SK-N-SH (cell line): ENCODE measurements at regions of chr1 and their contacts with region 1.

Region 1: DNA sequence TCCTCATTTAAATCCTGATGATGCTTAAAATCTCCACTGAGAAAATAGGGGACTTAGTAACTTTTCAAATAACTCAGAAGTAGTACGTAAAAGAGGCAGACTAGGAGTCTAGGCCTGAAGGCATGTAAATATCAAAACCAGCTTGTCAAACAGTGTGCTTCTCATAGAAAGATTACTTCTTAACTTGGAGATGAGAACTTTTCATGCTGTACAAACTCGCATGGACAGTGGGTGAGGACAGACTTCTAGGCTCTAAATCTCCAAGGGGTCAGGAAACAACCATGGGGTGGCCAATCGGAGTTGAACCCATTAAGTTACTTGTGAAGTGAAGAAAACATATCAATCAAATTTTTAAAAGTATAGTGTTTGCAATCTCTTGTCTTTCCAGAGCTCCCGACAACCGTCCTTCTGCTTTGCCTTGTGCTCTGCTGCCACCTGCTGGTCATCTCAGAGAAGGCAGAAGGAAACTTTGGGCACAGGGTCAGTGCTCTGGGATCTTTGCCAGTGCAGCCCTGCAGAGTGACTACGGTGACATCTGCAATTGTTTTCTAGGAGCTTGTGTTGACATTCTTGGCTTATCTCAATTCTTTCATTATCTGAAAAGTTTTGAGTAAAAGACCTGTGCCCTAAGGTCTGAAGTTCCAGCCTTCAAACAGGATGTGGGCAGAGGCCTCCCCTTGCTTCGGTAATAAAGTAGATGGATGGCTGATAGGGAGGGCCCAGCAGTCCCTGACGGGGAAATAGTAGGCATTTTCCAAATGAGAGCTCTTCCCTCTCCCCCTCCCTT is 105.1 kb upstream of the PDE4B start:
- DNase-seq: peak; percentile 70
- H3K4me3 ChIP-seq: no peak overlapping the region; a peak in 2 of 4 replicates
- H3K27ac ChIP-seq: no peak overlapping the region
- H3K4me1 ChIP-seq: peaks cover 0 to 6% of the 10 kb centered on the region in 2 experiments; a peak in 1 of 4 replicates
- H3K27me3 ChIP-seq: no peaks in the 10 kb centered on the region
- CTCF ChIP-seq: peak; percentile 89
- EP300 ChIP-seq: peak in 1 of 2 experiments; percentile 63; a peak in 2 of 4 replicates
- RAD21 ChIP-seq: peak; percentile 100

Region 2: DNA sequence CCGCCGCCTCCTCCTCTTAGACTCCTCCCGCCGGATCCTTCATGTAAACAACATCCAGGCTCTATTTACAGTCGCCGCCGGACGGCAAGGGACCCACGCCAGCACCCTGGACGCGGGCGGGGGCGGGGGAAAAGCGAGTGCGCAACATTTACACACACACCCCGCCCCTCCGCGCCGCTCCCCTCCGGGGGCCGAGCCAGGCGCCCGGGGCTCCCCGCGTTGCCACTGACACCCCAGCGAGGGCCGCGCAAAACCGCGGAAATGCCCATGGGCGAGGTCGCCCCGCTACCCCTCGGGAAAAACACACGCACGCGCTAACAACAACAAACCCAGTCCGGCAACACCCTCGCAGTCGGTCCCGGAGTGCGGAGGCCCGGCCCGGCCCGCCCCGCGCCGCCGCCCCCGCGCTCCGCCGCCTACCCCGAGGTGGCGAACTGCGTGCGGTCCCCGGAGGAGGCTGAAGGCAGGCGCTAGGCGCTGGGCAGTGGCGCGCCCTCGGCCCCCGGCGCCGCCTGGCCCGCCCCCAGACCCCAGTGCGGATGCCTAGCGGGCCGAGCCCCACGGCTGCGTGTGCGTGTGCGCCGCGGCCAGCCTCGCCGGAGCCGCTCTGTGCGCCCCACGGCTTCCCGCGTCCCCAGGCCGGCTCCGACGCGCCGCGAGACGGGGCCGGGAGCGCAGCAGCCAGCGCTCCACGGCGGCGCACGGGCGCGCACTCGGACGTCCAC is 620.7 kb before region 1 on chr1:
- CTCF ChIA-PET with region 1: interaction called, 13 read pairs
- POLR2A ChIA-PET with region 1: no interaction called
- DNase-seq: peak; percentile 87
- H3K4me3 ChIP-seq: peak overlapping the region; percentile 80 to 85
- H3K27ac ChIP-seq: peak overlapping the region in 1 of 2 experiments; percentile 87; a peak in 2 of 4 replicates
- H3K4me1 ChIP-seq: peaks cover 7 to 16% of the 10 kb centered on the region in 2 experiments; a peak in 3 of 4 replicates
- H3K27me3 ChIP-seq: no peaks in the 10 kb centered on the region
- CTCF ChIP-seq: no peak
- EP300 ChIP-seq: no peak
- RAD21 ChIP-seq: no peak

Region 3: GRCh38 chr1:65235867-65236805 is 451.5 kb before region 1 on chr1:
- CTCF ChIA-PET with region 1: interaction called, 30 read pairs
- POLR2A ChIA-PET with region 1: no interaction called
- DNase-seq: peak; percentile 25
- H3K4me3 ChIP-seq: no peak overlapping the region; a peak in 1 of 4 replicates
- H3K27ac ChIP-seq: no peak overlapping the region
- H3K4me1 ChIP-seq: peaks cover 0 to 7% of the 10 kb centered on the region in 2 experiments; a peak in 3 of 4 replicates
- H3K27me3 ChIP-seq: no peaks in the 10 kb centered on the region
- CTCF ChIP-seq: peak; percentile 61
- EP300 ChIP-seq: no peak
- RAD21 ChIP-seq: peak; percentile 78

Region 4: DNA sequence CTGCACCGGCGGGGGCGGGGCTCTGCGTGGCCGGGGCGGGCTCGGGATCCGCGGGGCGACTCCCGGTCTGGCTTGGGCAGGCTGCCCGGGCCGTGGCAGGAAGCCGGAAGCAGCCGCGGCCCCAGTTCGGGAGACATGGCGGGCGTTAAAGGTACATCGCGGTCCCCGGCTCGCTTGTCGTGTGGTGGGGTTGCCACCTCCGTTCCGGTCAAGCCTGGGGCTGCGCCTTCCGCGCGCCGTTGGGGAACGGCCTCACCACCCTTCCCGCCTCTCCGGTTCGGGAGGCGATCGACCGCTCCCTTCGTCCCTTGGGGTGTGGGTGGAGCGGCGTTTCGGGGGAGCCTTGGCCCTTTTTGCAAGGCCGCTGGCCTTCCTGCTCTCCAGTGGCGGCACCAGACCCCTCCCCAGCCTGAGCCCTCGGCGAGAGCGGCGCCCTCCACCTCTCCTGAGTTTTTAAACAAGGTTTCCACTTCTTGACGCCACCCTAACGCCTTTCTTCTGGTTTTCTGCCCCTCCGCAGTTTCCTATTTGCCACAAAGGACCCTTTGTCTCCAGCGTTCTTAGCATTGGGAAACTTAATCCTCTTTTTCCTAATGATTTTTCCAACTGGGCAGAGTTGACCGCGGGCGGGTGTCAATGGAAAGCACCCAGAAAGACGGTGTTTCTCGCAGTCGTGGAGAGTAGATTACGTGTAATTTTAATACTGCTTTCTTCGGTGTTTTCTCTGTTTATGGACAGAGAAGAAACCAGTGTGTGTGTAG is 266.9 kb before region 1 on chr1 and contains the starts of genes LEPR and LEPROT:
- CTCF ChIA-PET with region 1: interaction called, 56 read pairs
- POLR2A ChIA-PET with region 1: no interaction called
- DNase-seq: no peak
- H3K4me3 ChIP-seq: peak within 1 kb of the TSS; percentile 84 to 95
- H3K27ac ChIP-seq: peak within 1 kb of the TSS; percentile 95 to 97
- H3K4me1 ChIP-seq: peaks cover 13 to 23% of the 10 kb centered on the region in 2 experiments
- H3K27me3 ChIP-seq: no peaks in the 10 kb centered on the region
- CTCF ChIP-seq: no peak
- EP300 ChIP-seq: no peak
- RAD21 ChIP-seq: no peak
- polyA plus RNA-seq, gene LEPR: 2.3 and 3.2 TPM in 2 replicates
- polyA plus RNA-seq, gene LEPROT: 38.9 and 69.3 TPM in 2 replicates

Region 5: GRCh38 chr1:65668368-65668767 is 19.3 kb before region 1 on chr1:
- CTCF ChIA-PET with region 1: interaction called, 45 read pairs
- POLR2A ChIA-PET with region 1: no interaction called
- DNase-seq: no peak
- H3K4me3 ChIP-seq: no peak overlapping the region
- H3K27ac ChIP-seq: no peak overlapping the region
- H3K4me1 ChIP-seq: no peaks in the 10 kb centered on the region
- H3K27me3 ChIP-seq: no peaks in the 10 kb centered on the region
- CTCF ChIP-seq: no peak
- EP300 ChIP-seq: no peak
- RAD21 ChIP-seq: no peak

Region 6: DNA sequence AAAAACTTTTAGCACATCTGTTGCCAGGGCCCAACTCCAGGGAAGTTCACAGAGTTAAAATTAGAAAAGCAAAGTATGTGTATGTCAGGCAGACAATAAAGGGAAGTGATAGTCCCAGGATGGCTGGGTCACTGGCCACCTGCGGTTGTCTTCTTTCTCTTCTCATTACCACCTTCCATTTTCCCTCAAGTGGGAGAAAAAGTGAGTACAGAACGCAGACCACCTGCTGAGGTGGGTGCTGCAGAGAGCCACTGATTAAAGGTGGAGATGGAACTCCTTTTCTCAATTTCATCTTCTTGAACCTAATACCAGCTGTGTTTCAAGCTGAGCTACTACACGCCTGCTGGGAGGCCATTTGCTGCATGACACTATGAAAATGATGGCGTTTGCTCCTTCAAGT is 16.2 kb after region 1 on chr1:
- CTCF ChIA-PET with region 1: interaction called, 37 read pairs
- POLR2A ChIA-PET with region 1: interaction called, 3 read pairs
- DNase-seq: no peak
- H3K4me3 ChIP-seq: no peak overlapping the region
- H3K27ac ChIP-seq: no peak overlapping the region
- H3K4me1 ChIP-seq: peaks cover 0 to 3% of the 10 kb centered on the region in 2 experiments; a peak in 1 of 4 replicates
- H3K27me3 ChIP-seq: peaks cover 6% of the 10 kb centered on the region; the same call in 1 of the 2 replicates
- CTCF ChIP-seq: no peak
- EP300 ChIP-seq: no peak
- RAD21 ChIP-seq: no peak